ENCODE measurements at regions of chr4 and their contacts with region 1.

Region 1: DNA sequence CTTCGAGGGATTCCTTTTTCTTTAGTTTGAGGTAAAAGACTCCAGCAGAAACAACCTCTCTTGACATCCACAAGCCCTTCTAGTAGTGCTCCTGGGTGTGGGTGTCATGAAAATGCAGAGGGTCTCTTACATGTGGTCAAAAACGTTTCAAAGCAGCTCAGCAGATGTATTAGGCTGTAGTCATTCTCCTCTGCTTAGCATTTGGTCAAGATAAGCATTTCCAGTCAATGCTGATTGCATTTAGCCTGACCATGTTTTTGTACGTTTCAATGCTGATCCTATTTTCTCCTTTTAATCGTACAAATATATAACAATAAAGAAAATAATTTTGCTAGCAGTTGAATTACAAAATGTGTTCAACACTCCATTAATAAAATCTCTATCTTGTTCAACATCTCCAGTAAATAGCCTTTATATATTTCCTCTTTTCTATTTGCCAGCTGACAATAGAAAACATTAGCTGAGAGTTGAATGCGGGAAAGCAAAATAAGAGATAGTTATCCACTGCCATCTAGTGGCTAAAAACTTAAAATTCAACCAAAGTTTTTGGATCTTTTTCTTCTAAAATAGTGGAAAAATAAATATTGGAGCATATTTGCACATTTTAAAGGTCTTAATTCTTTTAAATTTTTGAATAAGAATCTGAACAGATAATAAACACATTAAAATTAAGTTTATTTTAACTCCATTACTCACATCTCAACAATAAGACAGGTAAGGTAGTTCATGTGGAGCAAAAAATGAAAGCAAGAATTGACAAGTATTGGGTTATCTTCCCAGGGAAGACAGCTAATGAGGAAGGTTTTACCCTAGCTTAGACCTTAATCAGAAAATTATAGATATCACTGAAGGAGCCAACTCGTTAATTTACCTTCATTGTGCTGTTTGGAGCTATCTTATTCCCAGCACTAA is 15.2 kb upstream of the PACRGL start:
- DNase-seq: peak; percentile 40
- H3K4me3 Mint-ChIP-seq: no peak overlapping the region
- H3K27ac Mint-ChIP-seq: no peak overlapping the region
- H3K4me1 Mint-ChIP-seq: no peaks in the 10 kb centered on the region
- H3K27me3 Mint-ChIP-seq: peaks cover 16% of the 10 kb centered on the region
- CTCF ChIP-seq: peak; percentile 53

Region 2: GRCh38 chr4:19224820-19225219 is 1460.3 kb before region 1 on chr4:
- CTCF ChIA-PET with region 1: no interaction called
- POLR2A ChIA-PET with region 1: no interaction called
- intact Hi-C with region 1: loop called (anchors 10 kb)
- DNase-seq: peak; percentile 27
- H3K4me3 Mint-ChIP-seq: no peak overlapping the region
- H3K27ac Mint-ChIP-seq: no peak overlapping the region
- H3K4me1 Mint-ChIP-seq: peaks cover 7% of the 10 kb centered on the region
- H3K27me3 Mint-ChIP-seq: no peaks in the 10 kb centered on the region
- CTCF ChIP-seq: peak; percentile 26

Region 3: DNA sequence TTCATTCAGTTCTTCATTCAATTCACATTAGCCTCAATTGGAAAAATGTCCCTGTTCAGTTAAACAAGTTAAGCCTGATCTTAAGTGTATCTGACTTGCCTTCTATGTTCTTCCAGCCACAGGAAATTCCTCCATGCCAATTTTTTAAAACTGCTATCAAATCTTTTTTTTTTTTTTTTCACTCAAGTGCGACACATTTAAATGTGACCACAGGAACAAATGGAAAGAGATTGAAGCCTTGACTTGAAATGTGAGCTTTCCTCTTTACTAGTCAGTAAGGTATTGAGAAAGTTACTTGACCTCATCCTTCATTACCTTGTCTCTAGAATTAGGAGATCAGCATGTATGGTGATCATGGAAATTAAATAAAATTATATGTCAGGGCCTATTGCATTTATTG is 268.3 kb before region 1 on chr4:
- CTCF ChIA-PET with region 1: interaction called, 55 read pairs
- POLR2A ChIA-PET with region 1: no interaction called
- intact Hi-C with region 1: no loop called
- DNase-seq: no peak
- H3K4me3 Mint-ChIP-seq: no peak overlapping the region
- H3K27ac Mint-ChIP-seq: no peak overlapping the region
- H3K4me1 Mint-ChIP-seq: no peaks in the 10 kb centered on the region
- H3K27me3 Mint-ChIP-seq: no peaks in the 10 kb centered on the region
- CTCF ChIP-seq: no peak

Region 4: DNA sequence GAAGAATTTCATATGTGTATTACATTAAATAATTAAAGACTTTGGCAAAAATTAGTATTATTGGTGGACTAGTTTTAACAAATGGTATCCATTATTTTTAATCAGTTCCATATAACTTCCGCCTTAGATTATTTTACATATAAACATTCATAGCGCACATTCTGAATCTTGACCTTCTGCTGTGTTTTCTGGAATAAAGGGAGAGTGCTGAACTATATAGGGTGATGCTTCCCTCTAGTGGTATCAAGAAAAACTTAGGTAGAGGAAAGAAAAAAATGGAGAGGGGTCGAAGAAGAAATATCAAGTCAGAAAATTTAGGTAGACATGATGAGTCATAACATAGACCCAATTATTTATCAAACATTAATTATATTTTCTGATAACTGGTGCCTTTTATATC is 140.5 kb before region 1 on chr4:
- CTCF ChIA-PET with region 1: interaction called, 15 read pairs
- POLR2A ChIA-PET with region 1: no interaction called
- intact Hi-C with region 1: loop called (anchors 1 kb)
- DNase-seq: peak; percentile 56
- H3K4me3 Mint-ChIP-seq: no peak overlapping the region
- H3K27ac Mint-ChIP-seq: no peak overlapping the region
- H3K4me1 Mint-ChIP-seq: no peaks in the 10 kb centered on the region
- H3K27me3 Mint-ChIP-seq: no peaks in the 10 kb centered on the region
- CTCF ChIP-seq: peak; percentile 52

Region 5: DNA sequence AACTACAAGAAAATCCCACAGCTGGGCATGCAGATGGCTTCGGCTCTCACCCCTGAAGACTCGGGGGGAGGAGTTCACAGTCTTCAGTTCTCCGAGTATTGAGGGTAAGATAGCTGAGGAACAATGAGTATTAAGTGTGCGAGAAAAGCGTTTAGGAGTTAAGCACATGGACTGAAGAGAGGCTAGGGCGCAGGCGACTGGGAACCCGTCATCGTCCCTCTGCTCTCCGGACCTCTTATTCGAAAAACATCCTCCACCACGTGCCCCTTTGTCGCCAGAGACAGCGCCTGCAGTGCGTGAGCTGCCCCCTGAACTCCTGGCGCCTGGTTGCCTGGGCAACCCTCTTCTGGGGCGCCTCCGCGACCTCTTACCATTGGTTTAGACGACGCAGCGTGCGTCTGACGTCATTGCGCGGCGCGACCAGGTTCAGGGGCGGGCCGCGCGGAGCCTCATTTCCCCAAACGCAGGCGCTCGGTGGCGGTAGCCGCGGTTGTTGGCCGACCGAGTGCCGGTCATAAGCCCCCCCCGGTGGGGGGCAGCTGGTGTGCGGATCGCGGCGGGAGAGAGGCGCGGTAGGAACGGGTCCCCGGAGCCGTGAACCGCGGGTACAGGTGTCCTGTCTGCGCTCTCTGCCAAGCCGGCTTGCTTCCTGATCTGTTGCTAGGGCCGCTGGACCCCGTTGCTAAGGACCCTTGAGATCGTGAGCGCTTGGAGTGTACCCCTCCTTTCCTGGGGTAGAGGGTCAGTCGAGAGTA is 15.1 kb after region 1 on chr4 and contains the start of gene PACRGL:
- CTCF ChIA-PET with region 1: interaction called, 14 read pairs
- POLR2A ChIA-PET with region 1: interaction called, 6 read pairs
- intact Hi-C with region 1: no loop called
- DNase-seq: peak; percentile 94
- H3K4me3 Mint-ChIP-seq: peak within 1 kb of the TSS; percentile 93
- H3K27ac Mint-ChIP-seq: peak within 1 kb of the TSS; percentile 96
- H3K4me1 Mint-ChIP-seq: peaks cover 17% of the 10 kb centered on the region
- H3K27me3 Mint-ChIP-seq: no peaks in the 10 kb centered on the region
- CTCF ChIP-seq: no peak
- total RNA-seq, gene PACRGL: 23.7 and 28.3 TPM in 2 replicates

Region 6: DNA sequence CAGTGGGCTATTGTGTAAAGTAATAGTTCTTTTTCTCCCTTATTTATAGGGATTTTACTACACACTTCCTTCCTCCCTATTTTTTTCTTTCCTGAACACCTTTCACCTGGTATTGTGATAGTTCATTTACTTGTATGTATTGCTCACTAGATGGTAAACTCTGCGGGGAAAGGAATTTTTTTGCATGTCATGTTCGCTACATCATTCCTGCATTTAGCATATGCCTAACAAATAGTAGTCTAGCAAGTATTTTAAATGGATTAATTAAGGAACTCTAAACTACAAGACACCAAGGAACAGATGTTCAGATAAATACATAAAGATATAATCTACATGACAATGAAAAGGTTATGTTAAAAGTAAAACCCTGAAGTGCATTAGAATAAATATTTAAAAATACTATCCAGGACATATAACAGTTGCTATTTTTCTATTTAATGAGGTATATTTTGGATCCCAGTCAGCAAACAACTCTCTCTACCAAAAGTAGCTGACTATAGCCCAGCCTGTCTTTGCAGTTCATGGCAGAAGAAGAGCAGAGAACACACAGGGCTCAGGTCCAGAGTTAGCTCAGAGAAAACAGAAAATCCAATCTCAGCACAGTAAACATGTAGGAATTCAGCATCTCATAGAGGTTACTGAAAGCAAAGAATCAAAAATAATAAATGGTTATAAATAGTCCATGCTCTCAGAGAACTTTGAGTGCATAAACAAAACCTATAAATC is 103.0 kb after region 1 on chr4:
- CTCF ChIA-PET with region 1: no interaction called
- POLR2A ChIA-PET with region 1: no interaction called
- intact Hi-C with region 1: no loop called
- DNase-seq: no peak
- H3K4me3 Mint-ChIP-seq: no peak overlapping the region
- H3K27ac Mint-ChIP-seq: no peak overlapping the region
- H3K4me1 Mint-ChIP-seq: no peaks in the 10 kb centered on the region
- H3K27me3 Mint-ChIP-seq: no peaks in the 10 kb centered on the region
- CTCF ChIP-seq: no peak

Measured in MCF 10A (cell line).